ENCODE measurements at regions of chr7 and their contacts with region 1.

Region 1: GRCh38 chr7:50206453-50207250 is 97.9 kb upstream of the IKZF1 start:
- DNase-seq: peak; percentile 44 to 89 (median 78)
- ATAC-seq: peak; percentile 70
- H3K4me3 ChIP-seq: peak overlapping the region; percentile 20
- H3K4me3 Mint-ChIP-seq: peak overlapping the region; percentile 72
- H3K27ac ChIP-seq: peak overlapping the region; percentile 49 to 66
- H3K27ac Mint-ChIP-seq: peak overlapping the region; percentile 92
- H3K4me1 ChIP-seq: peaks cover 77% of the 10 kb centered on the region
- H3K4me1 Mint-ChIP-seq: peaks cover 76% of the 10 kb centered on the region
- H3K27me3 ChIP-seq: no peaks in the 10 kb centered on the region
- H3K27me3 Mint-ChIP-seq: no peaks in the 10 kb centered on the region
- CTCF ChIP-seq: no peak

Region 2: GRCh38 chr7:50147951-50148808 is 58.5 kb before region 1 on chr7:
- CTCF ChIA-PET with region 1: interaction called, 16 read pairs
- POLR2A ChIA-PET with region 1: interaction called, 7 read pairs
- intact Hi-C with region 1: loop called in 1 of 2 experiments (anchors 2 kb)
- DNase-seq: peak in 6 of 14 experiments; percentile 19 to 85 (median 54)
- ATAC-seq: peak; percentile 86
- H3K4me3 ChIP-seq: no peak overlapping the region
- H3K4me3 Mint-ChIP-seq: peak overlapping the region; percentile 14
- H3K27ac ChIP-seq: peak overlapping the region; percentile 23 to 45
- H3K27ac Mint-ChIP-seq: peak overlapping the region; percentile 81
- H3K4me1 ChIP-seq: peaks cover 36% of the 10 kb centered on the region
- H3K4me1 Mint-ChIP-seq: peaks cover 67% of the 10 kb centered on the region
- H3K27me3 ChIP-seq: no peaks in the 10 kb centered on the region
- H3K27me3 Mint-ChIP-seq: no peaks in the 10 kb centered on the region
- CTCF ChIP-seq: no peak

Region 3: GRCh38 chr7:50266635-50267386 is 60.2 kb after region 1 on chr7:
- CTCF ChIA-PET with region 1: interaction called, 8 read pairs
- POLR2A ChIA-PET with region 1: interaction called, 38 read pairs
- intact Hi-C with region 1: loop called (anchors 1 to 2 kb)
- DNase-seq: peak; percentile 30 to 92 (median 78)
- ATAC-seq: peak; percentile 78
- H3K4me3 ChIP-seq: peak overlapping the region; percentile 19
- H3K4me3 Mint-ChIP-seq: peak overlapping the region; percentile 69
- H3K27ac ChIP-seq: peak overlapping the region; percentile 79 to 82
- H3K27ac Mint-ChIP-seq: peak overlapping the region; percentile 90
- H3K4me1 ChIP-seq: peaks cover 87% of the 10 kb centered on the region
- H3K4me1 Mint-ChIP-seq: peaks cover 98% of the 10 kb centered on the region
- H3K27me3 ChIP-seq: no peaks in the 10 kb centered on the region
- H3K27me3 Mint-ChIP-seq: no peaks in the 10 kb centered on the region
- CTCF ChIP-seq: no peak

Region 4: GRCh38 chr7:50304158-50304910 is 97.7 kb after region 1 on chr7 and contains the start of gene IKZF1:
- CTCF ChIA-PET with region 1: interaction called, 70 read pairs
- POLR2A ChIA-PET with region 1: interaction called, 271 read pairs
- intact Hi-C with region 1: loop called (anchors 1 kb)
- DNase-seq: peak in 12 of 14 experiments; percentile 31 to 81 (median 62)
- ATAC-seq: peak; percentile 25
- H3K4me3 ChIP-seq: peak within 1 kb of the TSS; percentile 87
- H3K4me3 Mint-ChIP-seq: peak within 1 kb of the TSS; percentile 100
- H3K27ac ChIP-seq: peak within 1 kb of the TSS; percentile 67 to 93
- H3K27ac Mint-ChIP-seq: peak within 1 kb of the TSS; percentile 90
- H3K4me1 ChIP-seq: peaks cover 40% of the 10 kb centered on the region
- H3K4me1 Mint-ChIP-seq: peaks cover 63% of the 10 kb centered on the region
- H3K27me3 ChIP-seq: no peaks in the 10 kb centered on the region
- H3K27me3 Mint-ChIP-seq: no peaks in the 10 kb centered on the region
- CTCF ChIP-seq: no peak
- total RNA-seq, gene IKZF1: 297 to 300 TPM

Region 5: GRCh38 chr7:50349963-50350944 is 143.6 kb after region 1 on chr7:
- CTCF ChIA-PET with region 1: interaction called, 12 read pairs
- POLR2A ChIA-PET with region 1: interaction called, 32 read pairs
- intact Hi-C with region 1: no loop called
- DNase-seq: peak; percentile 47 to 84 (median 75)
- ATAC-seq: peak; percentile 63
- H3K4me3 ChIP-seq: peak overlapping the region; percentile 23
- H3K4me3 Mint-ChIP-seq: peak overlapping the region; percentile 52
- H3K27ac ChIP-seq: peak overlapping the region; percentile 86 to 95
- H3K27ac Mint-ChIP-seq: no peak overlapping the region
- H3K4me1 ChIP-seq: peaks cover 92% of the 10 kb centered on the region
- H3K4me1 Mint-ChIP-seq: peaks cover 98% of the 10 kb centered on the region
- H3K27me3 ChIP-seq: no peaks in the 10 kb centered on the region
- H3K27me3 Mint-ChIP-seq: no peaks in the 10 kb centered on the region
- CTCF ChIP-seq: no peak

Region 6: GRCh38 chr7:50418086-50418515 is 211.4 kb after region 1 on chr7:
- CTCF ChIA-PET with region 1: interaction called, 12 read pairs
- POLR2A ChIA-PET with region 1: interaction called, 19 read pairs
- intact Hi-C with region 1: loop called (anchors 1 kb)
- DNase-seq: peak; percentile 50 to 86 (median 62)
- ATAC-seq: peak; percentile 91
- H3K4me3 ChIP-seq: no peak overlapping the region
- H3K4me3 Mint-ChIP-seq: no peak overlapping the region
- H3K27ac ChIP-seq: no peak overlapping the region
- H3K27ac Mint-ChIP-seq: no peak overlapping the region
- H3K4me1 ChIP-seq: peaks cover 28% of the 10 kb centered on the region
- H3K4me1 Mint-ChIP-seq: peaks cover 31% of the 10 kb centered on the region
- H3K27me3 ChIP-seq: no peaks in the 10 kb centered on the region
- H3K27me3 Mint-ChIP-seq: no peaks in the 10 kb centered on the region
- CTCF ChIP-seq: peak; percentile 96